Activated CD8-positive, alpha-beta T cell treated with anti-CD3 and anti-CD28 coated beads, Interleukin-2, amount 10 ng/mL, durations not matched to agents 7 days and 5 days (primary cell): ENCODE measurements at regions of chr17 and their contacts with region 1.

Region 1: DNA sequence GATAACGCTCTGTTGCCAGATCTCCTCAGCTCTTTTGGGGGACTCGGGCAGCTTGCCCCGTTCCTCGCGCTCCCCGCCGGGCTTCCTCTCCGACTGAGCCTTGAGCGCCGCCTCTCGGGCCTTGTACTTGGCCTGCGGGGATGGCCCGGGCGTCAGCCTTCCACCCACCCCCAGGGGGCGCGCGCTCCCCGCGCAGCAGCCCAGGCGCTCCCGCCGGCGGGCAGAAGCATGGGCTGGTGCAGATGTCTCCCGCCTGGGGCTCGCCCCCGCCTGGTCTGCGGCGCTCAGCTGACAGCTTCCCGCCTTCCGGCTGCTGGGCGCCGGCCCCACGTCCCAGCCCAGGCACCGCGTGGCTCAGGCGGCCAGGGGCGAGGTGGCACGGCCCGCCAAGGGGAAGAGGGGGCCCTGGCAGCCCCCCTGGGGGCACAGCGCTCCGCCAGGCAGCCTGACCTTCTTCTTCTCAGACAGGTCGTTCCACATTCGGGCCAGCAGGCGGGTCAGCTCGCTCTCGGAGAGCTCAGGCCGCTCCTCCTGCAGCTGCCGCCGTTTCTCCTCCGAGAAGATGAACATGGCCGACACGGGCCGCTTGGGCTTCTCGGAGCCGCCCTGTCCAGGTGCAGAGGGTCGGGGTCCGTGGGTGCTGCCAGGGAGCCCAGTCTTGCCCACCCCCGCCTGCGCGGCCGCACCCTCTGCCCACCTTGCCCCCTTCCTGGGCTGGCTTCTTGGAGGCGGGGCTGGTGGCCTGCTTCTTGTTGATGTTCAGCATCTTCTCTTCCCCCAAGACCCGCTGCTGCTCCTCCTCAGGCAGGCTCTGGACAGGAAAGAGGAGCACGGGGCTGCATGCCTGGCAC is 8.9 kb downstream of the UBTF start:
- DNase-seq: peak; percentile 95
- ATAC-seq: peak; percentile 100
- H3K4me3 Mint-ChIP-seq: peak overlapping the region; percentile 68
- H3K27ac Mint-ChIP-seq: peak overlapping the region; percentile 84
- H3K4me1 Mint-ChIP-seq: peaks cover 61% of the 10 kb centered on the region
- H3K27me3 Mint-ChIP-seq: no peaks in the 10 kb centered on the region

Region 2: GRCh38 chr17:43823350-43824084 is 387.1 kb before region 1 on chr17:
- CTCF ChIA-PET with region 1: no interaction called
- POLR2A ChIA-PET with region 1: no interaction called
- DNase-seq: no peak
- ATAC-seq: no peak
- H3K4me3 Mint-ChIP-seq: no peak overlapping the region
- H3K27ac Mint-ChIP-seq: no peak overlapping the region
- H3K4me1 Mint-ChIP-seq: no peaks in the 10 kb centered on the region
- H3K27me3 Mint-ChIP-seq: no peaks in the 10 kb centered on the region

Region 3: GRCh38 chr17:44186307-44187130 is 24.0 kb before region 1 on chr17 and contains the start of gene TMUB2:
- CTCF ChIA-PET with region 1: interaction called, 27 read pairs
- POLR2A ChIA-PET with region 1: interaction called, 18 read pairs
- DNase-seq: peak; percentile 100
- ATAC-seq: peak; percentile 91
- H3K4me3 Mint-ChIP-seq: peak within 1 kb of the TSS; percentile 97
- H3K27ac Mint-ChIP-seq: peak within 1 kb of the TSS; percentile 100
- H3K4me1 Mint-ChIP-seq: peaks cover 44% of the 10 kb centered on the region
- H3K27me3 Mint-ChIP-seq: no peaks in the 10 kb centered on the region
- total RNA-seq, gene TMUB2: 26.7 to 27.9 TPM

Region 4: GRCh38 chr17:44247440-44247841 is 36.9 kb after region 1 on chr17:
- CTCF ChIA-PET with region 1: interaction called, 20 read pairs
- POLR2A ChIA-PET with region 1: interaction called, 3 read pairs
- DNase-seq: no peak
- ATAC-seq: no peak
- H3K4me3 Mint-ChIP-seq: no peak overlapping the region
- H3K27ac Mint-ChIP-seq: peak overlapping the region; percentile 86
- H3K4me1 Mint-ChIP-seq: peaks cover 48% of the 10 kb centered on the region
- H3K27me3 Mint-ChIP-seq: no peaks in the 10 kb centered on the region

Region 5: GRCh38 chr17:44314869-44315661 is 104.5 kb after region 1 on chr17:
- CTCF ChIA-PET with region 1: interaction called, 19 read pairs
- POLR2A ChIA-PET with region 1: interaction called, 4 read pairs
- DNase-seq: peak; percentile 63
- ATAC-seq: peak; percentile 71
- H3K4me3 Mint-ChIP-seq: peak overlapping the region; percentile 57
- H3K27ac Mint-ChIP-seq: no peak overlapping the region
- H3K4me1 Mint-ChIP-seq: peaks cover 12% of the 10 kb centered on the region
- H3K27me3 Mint-ChIP-seq: peaks cover 38% of the 10 kb centered on the region

Region 6: GRCh38 chr17:44331249-44331760 is 120.7 kb after region 1 on chr17:
- CTCF ChIA-PET with region 1: interaction called, 67 read pairs
- POLR2A ChIA-PET with region 1: interaction called, 59 read pairs
- DNase-seq: peak; percentile 87
- ATAC-seq: peak; percentile 42
- H3K4me3 Mint-ChIP-seq: no peak overlapping the region
- H3K27ac Mint-ChIP-seq: peak overlapping the region; percentile 49
- H3K4me1 Mint-ChIP-seq: peaks cover 18% of the 10 kb centered on the region
- H3K27me3 Mint-ChIP-seq: no peaks in the 10 kb centered on the region

Region 7: DNA sequence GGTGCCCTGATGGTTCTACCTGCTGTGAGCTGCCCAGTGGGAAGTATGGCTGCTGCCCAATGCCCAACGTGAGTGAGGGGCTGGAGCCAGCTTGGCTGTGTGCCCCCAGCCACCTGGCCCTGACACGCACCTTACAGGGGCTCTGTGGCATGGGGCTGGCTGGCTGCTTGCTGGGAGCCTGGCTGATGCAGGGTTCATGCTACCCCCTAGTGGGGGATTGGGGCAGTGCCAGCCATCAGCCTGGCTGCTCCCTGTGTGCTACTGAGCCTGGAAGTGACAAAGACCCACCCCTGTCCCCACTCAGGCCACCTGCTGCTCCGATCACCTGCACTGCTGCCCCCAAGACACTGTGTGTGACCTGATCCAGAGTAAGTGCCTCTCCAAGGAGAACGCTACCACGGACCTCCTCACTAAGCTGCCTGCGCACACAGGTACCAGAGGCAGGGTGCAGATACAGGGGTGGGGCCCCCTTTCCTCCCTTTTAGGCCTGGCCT is 140.2 kb after region 1 on chr17:
- CTCF ChIA-PET with region 1: interaction called, 68 read pairs
- POLR2A ChIA-PET with region 1: no interaction called
- DNase-seq: peak; percentile 83
- ATAC-seq: peak; percentile 86
- H3K4me3 Mint-ChIP-seq: no peak overlapping the region
- H3K27ac Mint-ChIP-seq: no peak overlapping the region
- H3K4me1 Mint-ChIP-seq: peaks cover 18% of the 10 kb centered on the region
- H3K27me3 Mint-ChIP-seq: peaks cover 6% of the 10 kb centered on the region